KBM-7 (cell line): ENCODE measurements at regions of chr4 and their contacts with region 1.

Region 1: GRCh38 chr4:158253350-158253980 is 43.2 kb downstream of the TMEM144 start:
- DNase-seq: peak; percentile 76

Region 2: DNA sequence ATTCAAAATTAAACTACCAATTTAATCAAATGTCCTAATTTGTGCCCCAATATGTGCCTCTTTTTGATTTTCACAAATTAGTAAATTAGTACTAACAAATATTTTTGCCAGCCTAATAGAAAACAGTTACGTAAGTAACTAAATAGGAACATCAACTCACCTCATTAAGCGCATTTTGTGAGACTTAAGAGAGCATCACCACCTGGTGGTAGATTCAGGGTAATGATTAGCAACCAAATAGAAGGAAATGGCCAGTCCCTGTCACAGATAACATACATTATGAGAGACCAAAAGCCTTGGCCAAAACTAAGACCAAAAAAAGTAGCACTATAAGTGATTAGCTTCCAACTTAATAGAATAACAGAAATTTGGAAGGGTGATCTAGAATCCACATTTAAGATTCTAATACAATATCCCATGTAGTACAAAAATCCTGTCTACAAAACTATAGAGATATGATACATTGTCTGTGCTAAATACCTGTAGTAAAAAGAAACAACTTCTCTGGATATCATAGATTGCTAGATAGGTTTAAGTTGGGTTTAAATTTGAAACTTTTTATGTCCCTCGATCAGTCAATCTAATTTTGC is 371.5 kb after region 1 on chr4:
- in situ Hi-C with region 1: loop called (anchors 25 kb)
- DNase-seq: peak; percentile 46